Prostate gland (tissue), 2 donors: ENCODE measurements at regions of chr5 and their contacts with region 1.

Region 1: GRCh38 chr5:66171349-66172344 is 27.5 kb downstream of the SREK1 start:
- DNase-seq: peak; percentile 20
- H3K4me3 ChIP-seq: no peak overlapping the region
- H3K27ac ChIP-seq: no peak overlapping the region
- H3K4me1 ChIP-seq: no peaks in the 10 kb centered on the region
- H3K27me3 ChIP-seq: no peaks in the 10 kb centered on the region
- CTCF ChIP-seq: peak in 3 of 4 experiments; percentile 45 to 66 (median 58)
- POLR2A ChIP-seq: no peak

Region 2: DNA sequence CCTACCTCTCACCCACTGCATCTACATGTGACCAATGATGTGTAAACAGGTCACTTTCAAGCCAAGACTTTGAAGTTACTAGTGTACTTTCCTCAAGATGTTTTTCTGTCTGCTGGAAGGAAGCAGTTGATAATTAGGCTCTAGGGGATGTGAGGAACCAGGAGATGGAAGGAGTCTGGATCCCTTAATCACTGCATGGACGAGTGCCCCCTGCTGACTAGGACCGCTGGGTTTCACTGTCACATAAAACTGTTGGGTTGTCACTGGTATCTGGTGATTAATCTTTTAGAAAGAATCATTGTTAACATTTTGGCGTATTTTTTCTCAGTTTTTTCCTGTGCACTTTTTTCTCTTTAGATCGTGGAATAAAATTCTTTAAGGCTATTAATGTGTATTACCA is 52.0 kb after region 1 on chr5:
- intact Hi-C with region 1: loop called (anchors 5 kb)
- DNase-seq: peak; percentile 21
- H3K4me3 ChIP-seq: no peak overlapping the region
- H3K27ac ChIP-seq: no peak overlapping the region
- H3K4me1 ChIP-seq: no peaks in the 10 kb centered on the region
- H3K27me3 ChIP-seq: no peaks in the 10 kb centered on the region
- CTCF ChIP-seq: peak in 3 of 4 experiments; percentile 28 to 44 (median 41)
- POLR2A ChIP-seq: no peak

Region 3: GRCh38 chr5:66255714-66256113 is 84.1 kb after region 1 on chr5:
- intact Hi-C with region 1: no loop called
- DNase-seq: no peak
- H3K4me3 ChIP-seq: no peak overlapping the region
- H3K27ac ChIP-seq: no peak overlapping the region
- H3K4me1 ChIP-seq: no peaks in the 10 kb centered on the region
- H3K27me3 ChIP-seq: no peaks in the 10 kb centered on the region
- CTCF ChIP-seq: no peak
- POLR2A ChIP-seq: no peak

Region 4: DNA sequence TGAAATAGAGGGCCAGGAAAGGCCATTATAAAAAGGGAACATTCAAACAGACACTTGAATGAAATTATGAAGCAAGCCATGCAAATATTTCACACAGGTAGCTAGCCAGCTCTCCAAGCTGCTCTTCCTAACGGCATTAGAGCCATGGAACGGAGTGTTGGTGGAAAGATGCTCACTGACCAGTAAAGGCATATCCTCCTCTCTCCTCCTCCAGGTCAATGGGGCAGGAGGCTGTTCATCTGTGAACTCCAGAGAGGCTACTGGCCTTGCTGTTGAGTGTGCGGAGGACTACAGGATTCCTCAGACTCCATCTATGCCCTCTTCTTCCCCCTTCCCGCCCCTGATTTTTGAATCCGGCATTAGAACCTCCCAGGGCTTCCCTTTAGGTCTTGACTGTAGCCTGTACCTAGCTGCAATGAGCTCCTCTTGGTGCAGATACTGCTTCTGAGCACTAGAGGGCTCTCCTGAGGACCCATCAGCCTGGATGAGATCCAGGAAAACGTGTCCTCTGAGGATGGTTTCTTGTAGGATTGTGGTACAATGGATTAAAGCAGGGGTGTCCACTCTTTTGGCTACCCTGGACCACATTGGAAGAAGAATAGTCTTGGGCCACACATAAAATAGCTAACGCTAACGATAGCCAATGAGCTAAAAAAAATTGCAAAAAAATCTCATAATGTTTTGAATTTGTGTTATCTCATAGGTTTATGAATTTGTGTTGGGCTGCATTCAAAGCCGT is 134.6 kb after region 1 on chr5:
- intact Hi-C with region 1: loop called (anchors 5 kb)
- DNase-seq: peak; percentile 47
- H3K4me3 ChIP-seq: no peak overlapping the region
- H3K27ac ChIP-seq: no peak overlapping the region
- H3K4me1 ChIP-seq: no peaks in the 10 kb centered on the region
- H3K27me3 ChIP-seq: no peaks in the 10 kb centered on the region
- CTCF ChIP-seq: peak; percentile 17 to 69 (median 64)
- POLR2A ChIP-seq: no peak

Region 5: GRCh38 chr5:66769839-66770617 is 598.4 kb after region 1 on chr5:
- intact Hi-C with region 1: loop called (anchors 10 kb)
- DNase-seq: no peak
- H3K4me3 ChIP-seq: no peak overlapping the region
- H3K27ac ChIP-seq: no peak overlapping the region
- H3K4me1 ChIP-seq: no peaks in the 10 kb centered on the region
- H3K27me3 ChIP-seq: no peaks in the 10 kb centered on the region
- CTCF ChIP-seq: peak in 1 of 4 experiments; percentile 4
- POLR2A ChIP-seq: no peak